Activated CD4-positive, alpha-beta memory T cell treated with anti-CD3 and anti-CD28 coated beads, Interleukin-2, amount 10 ng/mL, durations not matched to agents 7 days and 5 days (primary cell): ENCODE measurements at regions of chr19 and their contacts with region 1.

Region 1: GRCh38 chr19:10286803-10287737 is at the start of gene ICAM4:
- DNase-seq: peak; percentile 67
- H3K4me3 Mint-ChIP-seq: peak within 1 kb of the TSS; percentile 50
- H3K27ac Mint-ChIP-seq: peak within 1 kb of the TSS; percentile 65
- H3K4me1 Mint-ChIP-seq: peaks cover 72% of the 10 kb centered on the region
- H3K27me3 Mint-ChIP-seq: peaks cover 44% of the 10 kb centered on the region
- total RNA-seq, gene ICAM4: 1.5 to 2.0 TPM

Region 2: DNA sequence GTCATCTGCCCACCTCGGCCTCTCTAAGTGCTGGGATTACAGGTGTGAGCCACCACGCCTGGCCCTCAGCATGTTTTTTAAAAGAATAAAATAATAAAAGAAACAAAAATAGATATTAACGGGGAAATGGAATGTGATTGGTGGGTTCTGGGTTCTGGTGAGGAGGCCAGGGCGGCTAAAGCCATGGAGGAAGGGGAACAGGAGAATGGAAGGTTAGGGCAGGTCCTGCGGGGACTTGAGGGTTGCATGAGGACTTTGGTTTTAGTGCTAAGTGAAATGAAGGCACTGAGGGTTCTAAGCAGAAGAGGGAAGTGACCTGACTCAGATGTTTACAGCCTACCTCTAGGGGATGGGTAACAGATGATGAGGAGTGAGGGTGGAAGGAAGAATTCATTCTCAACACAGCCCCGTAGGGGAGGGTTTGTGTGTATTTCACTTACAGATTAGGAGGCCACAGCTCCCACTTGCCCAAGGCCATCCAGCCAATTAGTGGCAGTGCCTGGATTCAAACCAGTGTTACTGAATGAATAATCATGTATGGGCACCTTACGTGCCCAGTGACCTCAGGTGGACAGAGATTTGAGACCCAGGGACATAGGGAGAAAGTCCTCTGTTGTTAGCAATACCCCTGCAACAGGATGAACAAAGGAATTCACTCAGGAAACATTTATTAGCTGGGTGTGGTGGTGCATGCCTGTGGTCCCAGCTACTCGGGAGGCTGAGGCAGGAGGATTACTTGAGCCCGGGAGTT is 41.7 kb before region 1 on chr19:
- CTCF ChIA-PET with region 1: no interaction called
- POLR2A ChIA-PET with region 1: no interaction called
- DNase-seq: no peak
- H3K4me3 Mint-ChIP-seq: no peak overlapping the region
- H3K27ac Mint-ChIP-seq: no peak overlapping the region
- H3K4me1 Mint-ChIP-seq: peaks cover 6% of the 10 kb centered on the region
- H3K27me3 Mint-ChIP-seq: no peaks in the 10 kb centered on the region

Region 3: DNA sequence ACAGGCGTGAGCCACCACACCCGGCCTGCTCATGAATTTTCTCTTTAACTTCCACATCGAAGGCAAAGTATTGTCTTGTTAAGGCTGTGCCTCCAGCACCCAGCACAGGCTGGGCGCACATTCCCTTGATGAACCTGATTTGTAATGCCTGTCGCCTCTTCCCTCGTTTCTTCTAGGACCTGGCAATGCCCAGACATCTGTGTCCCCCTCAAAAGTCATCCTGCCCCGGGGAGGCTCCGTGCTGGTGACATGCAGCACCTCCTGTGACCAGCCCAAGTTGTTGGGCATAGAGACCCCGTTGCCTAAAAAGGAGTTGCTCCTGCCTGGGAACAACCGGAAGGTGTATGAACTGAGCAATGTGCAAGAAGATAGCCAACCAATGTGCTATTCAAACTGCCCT is 12.5 kb before region 1 on chr19:
- CTCF ChIA-PET with region 1: interaction called, 28 read pairs
- POLR2A ChIA-PET with region 1: interaction called, 105 read pairs
- DNase-seq: no peak
- H3K4me3 Mint-ChIP-seq: no peak overlapping the region
- H3K27ac Mint-ChIP-seq: peak overlapping the region; percentile 7
- H3K4me1 Mint-ChIP-seq: peaks cover 51% of the 10 kb centered on the region
- H3K27me3 Mint-ChIP-seq: no peaks in the 10 kb centered on the region